ENCODE measurements at regions of chr4 and their contacts with region 1.

Region 1: DNA sequence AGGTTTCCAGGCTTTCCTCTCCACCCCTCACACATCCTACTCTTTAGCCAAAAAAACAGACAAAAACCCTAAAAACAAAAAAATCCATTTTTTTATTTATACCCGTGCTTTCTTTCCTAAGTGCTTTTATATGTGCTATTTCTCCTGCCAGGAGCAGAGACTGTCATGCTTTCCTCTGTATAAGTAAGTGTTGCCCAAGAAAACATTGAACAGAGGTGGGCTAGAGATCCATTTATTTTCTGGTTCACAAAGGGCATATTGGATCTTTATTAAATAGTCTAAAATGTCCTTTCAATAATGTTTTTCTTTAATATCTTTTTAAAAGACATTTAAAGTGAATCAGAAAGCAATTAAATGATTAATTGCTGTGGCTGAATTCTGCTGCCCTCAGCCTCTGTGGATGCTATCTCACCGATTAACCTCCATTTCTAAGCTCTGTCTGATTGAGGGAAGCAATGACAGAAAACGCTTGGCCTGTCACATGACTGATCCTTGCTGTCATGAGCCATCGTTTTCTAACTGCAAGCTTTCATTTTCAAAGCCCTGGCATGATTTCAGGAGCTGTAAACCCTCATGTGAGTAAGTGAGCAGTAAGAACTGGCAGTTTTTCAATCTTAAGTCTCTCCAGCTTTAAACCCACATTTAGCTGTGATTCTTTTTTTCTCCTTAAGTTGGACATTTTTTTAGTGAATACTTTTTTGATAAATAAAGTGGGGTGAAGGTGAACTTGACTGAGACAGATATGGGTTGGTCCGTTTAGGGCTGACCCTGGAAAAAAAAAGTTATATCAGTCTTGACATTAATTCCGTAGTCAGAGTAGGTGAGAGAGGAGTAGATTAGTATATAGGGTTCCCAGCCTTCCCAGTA is 180.7 kb upstream of the PGRMC2 start:
- DNase-seq: peak in 4 of 5 donors; percentile 36 to 51 (median 44)
- ATAC-seq: peak; percentile 70 to 86 (median 81)
- H3K4me3 ChIP-seq: peak overlapping the region in 2 of 12 donors; percentile 14 to 16
- H3K27ac ChIP-seq: peak overlapping the region in 10 of 12 donors; percentile 6 to 71 (median 24)
- H3K4me1 ChIP-seq: peaks cover 0 to 30% (median 9%) of the 10 kb centered on the region in 12 donors
- H3K27me3 ChIP-seq: no peaks in the 10 kb centered on the region
- CTCF ChIP-seq: no peak
- POLR2A ChIP-seq: no peak

Region 2: GRCh38 chr4:128322995-128323394 is 145.4 kb before region 1 on chr4:
- intact Hi-C with region 1: no loop called
- DNase-seq: no peak
- ATAC-seq: peak in 1 of 4 donors; percentile 60
- H3K4me3 ChIP-seq: no peak overlapping the region
- H3K27ac ChIP-seq: no peak overlapping the region
- H3K4me1 ChIP-seq: no peaks in the 10 kb centered on the region
- H3K27me3 ChIP-seq: no peaks in the 10 kb centered on the region
- CTCF ChIP-seq: no peak
- POLR2A ChIP-seq: no peak

Region 3: DNA sequence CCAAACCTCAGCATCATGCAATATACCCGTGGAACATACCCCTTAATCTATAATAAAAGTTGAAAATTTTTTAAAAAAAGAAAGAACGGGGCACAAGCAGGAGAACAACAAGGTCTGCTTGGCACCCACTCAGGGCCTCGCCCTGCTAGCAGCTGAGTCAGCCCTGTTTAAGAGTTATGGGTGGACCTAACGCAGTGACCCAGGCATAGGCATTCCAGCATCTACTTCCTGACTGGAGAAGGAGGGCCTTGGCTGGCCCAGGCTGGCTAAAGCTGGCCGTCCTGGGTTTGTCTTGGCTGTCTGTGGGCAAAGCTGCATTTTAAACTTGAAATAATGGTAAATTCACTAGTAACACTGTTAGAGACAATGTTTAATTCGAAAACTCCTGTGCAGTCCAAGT is 56.0 kb after region 1 on chr4:
- intact Hi-C with region 1: loop called in 1 of 10 experiments (anchors 5 kb)
- DNase-seq: peak in 3 of 5 donors; percentile 25 to 59 (median 44)
- ATAC-seq: peak in 2 of 4 donors; percentile 60 to 72
- H3K4me3 ChIP-seq: no peak overlapping the region
- H3K27ac ChIP-seq: peak overlapping the region in 8 of 12 donors; percentile 2 to 61 (median 30)
- H3K4me1 ChIP-seq: peaks cover 3 to 55% (median 26%) of the 10 kb centered on the region in 12 donors
- H3K27me3 ChIP-seq: no peaks in the 10 kb centered on the region
- CTCF ChIP-seq: no peak
- POLR2A ChIP-seq: no peak

Region 4: DNA sequence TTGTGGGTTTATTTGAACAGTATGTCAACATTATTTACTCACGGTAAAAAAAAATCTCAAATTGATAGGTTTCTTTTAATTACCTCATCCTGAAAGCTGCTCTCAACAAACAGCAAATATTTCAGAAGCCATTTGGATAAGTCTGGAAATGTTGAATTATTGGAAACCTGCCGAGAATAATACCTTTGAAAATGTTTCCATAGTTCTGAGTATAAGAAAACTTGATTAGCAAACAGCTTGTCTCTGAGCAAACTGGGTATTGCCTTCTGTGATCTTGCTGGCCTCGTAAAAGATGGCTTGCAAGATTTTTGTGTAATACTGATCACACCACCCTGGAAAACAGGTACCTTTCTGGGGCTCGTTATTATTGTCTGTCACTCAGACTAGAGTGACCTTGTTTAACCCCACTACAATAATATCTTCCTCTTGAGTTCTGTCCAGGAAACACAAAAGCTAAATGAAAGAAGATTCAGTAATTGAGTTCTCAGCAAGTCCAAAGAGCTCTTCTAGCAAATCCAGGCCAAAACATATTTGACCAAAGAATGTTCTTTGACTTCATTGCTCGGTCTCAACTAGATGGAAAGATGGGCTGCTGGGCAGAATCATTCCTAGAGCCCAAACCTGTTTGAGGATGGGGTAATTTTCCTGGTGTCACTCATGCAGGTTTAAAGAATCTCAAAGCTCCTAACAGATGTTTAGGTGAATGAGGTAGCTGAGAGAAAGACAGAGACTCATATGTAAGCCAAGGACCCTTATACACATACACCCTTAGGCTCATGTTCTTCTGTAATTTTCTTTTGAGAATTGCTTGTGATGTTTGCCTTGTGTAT is 85.5 kb after region 1 on chr4:
- intact Hi-C with region 1: loop called in 3 of 10 experiments (anchors 2 to 10 kb)
- DNase-seq: no peak
- ATAC-seq: peak in 2 of 4 donors; percentile 30 to 37
- H3K4me3 ChIP-seq: peak overlapping the region; percentile 21 to 73 (median 58)
- H3K27ac ChIP-seq: peak overlapping the region; percentile 80 to 95 (median 88)
- H3K4me1 ChIP-seq: peaks cover 0 to 17% (median 12%) of the 10 kb centered on the region in 12 donors
- H3K27me3 ChIP-seq: no peaks in the 10 kb centered on the region
- CTCF ChIP-seq: no peak
- POLR2A ChIP-seq: no peak

Region 5: GRCh38 chr4:128558896-128559679 is 90.7 kb after region 1 on chr4:
- intact Hi-C with region 1: loop called in 3 of 10 experiments (anchors 5 to 10 kb)
- DNase-seq: no peak
- ATAC-seq: peak in 3 of 4 donors; percentile 54 to 63 (median 63)
- H3K4me3 ChIP-seq: no peak overlapping the region
- H3K27ac ChIP-seq: peak overlapping the region in 4 of 12 donors; percentile 21 to 74 (median 32)
- H3K4me1 ChIP-seq: peaks cover 0 to 20% (median 2%) of the 10 kb centered on the region in 12 donors
- H3K27me3 ChIP-seq: no peaks in the 10 kb centered on the region
- CTCF ChIP-seq: no peak
- POLR2A ChIP-seq: no peak

Measured in heart left ventricle (tissue), 16 donors.